ENCODE measurements at regions of chr11 and their contacts with region 1.

Region 1: DNA sequence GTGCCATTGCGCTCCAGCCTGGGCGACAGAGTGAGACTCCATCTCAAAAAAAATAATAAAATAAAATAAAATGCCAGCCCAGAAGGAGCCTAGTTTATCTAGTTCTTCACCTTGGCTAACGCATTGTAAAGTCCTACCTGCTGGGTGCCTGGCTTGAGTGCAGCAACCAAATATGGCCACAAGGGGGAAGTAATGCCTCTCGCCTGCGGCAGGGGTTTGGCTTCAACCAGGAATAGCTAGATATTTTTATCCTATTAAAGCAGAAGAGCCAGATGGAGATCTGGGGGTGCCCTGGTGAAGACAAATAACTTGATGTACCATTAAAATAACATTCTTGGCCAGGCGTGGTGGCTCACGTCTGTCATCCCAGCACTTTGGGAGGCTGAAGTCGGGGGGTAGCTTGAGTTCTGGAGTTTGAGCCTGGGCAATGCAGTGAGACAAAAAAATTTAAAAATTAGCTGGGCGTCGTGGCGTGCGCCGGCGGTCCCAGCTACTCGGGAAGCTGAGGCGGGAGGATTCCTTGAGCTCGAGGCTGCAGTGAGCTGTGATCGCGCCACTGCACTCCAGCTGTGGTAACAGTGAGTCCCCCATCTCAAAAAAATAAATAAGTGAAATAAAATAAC is 20.6 kb upstream of the PLEKHB1 start:
- DNase-seq: peak; percentile 81
- ATAC-seq: peak; percentile 91
- H3K4me3 Mint-ChIP-seq: no peak overlapping the region
- H3K27ac Mint-ChIP-seq: no peak overlapping the region
- H3K4me1 Mint-ChIP-seq: no peaks in the 10 kb centered on the region
- H3K27me3 Mint-ChIP-seq: peaks cover 8% of the 10 kb centered on the region

Region 2: DNA sequence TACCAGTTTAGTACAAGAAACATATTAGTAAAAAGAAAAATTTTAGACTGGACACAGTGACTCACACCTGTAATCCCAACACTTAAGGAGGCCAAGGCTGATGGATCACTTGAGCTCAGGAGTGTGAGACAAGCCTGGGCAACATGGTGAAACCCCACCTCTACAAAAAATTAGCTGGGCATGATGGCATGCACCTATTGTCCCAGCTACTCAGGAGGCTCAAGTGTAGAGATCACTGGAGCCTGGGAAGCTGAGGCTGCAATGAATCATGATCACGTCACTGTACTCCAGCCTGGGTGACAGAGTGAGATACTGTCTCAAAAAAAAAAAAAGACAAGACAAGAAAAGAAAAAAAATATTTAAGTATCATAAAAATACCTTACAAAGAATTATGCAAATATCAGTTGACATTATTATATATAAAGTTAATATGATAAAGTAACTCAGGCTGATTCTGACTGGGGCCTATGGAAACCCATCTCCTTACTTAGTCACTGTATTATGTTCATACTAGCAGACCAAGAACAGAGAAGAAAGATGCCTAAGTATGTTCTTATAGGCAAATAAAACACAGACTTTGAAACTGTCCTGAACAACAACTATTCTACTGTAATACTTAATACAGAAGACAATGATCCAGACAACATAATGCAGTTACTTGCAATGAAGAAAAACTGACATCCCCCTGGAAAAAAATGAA is 55.2 kb before region 1 on chr11:
- CTCF ChIA-PET with region 1: interaction called, 5 read pairs
- POLR2A ChIA-PET with region 1: interaction called, 14 read pairs
- intact Hi-C with region 1: no loop called
- DNase-seq: no peak
- ATAC-seq: no peak
- H3K4me3 Mint-ChIP-seq: no peak overlapping the region
- H3K27ac Mint-ChIP-seq: no peak overlapping the region
- H3K4me1 Mint-ChIP-seq: no peaks in the 10 kb centered on the region
- H3K27me3 Mint-ChIP-seq: no peaks in the 10 kb centered on the region

Region 3: GRCh38 chr11:73640592-73640991 is 14.8 kb after region 1 on chr11:
- CTCF ChIA-PET with region 1: interaction called, 35 read pairs
- POLR2A ChIA-PET with region 1: no interaction called
- intact Hi-C with region 1: no loop called
- DNase-seq: no peak
- ATAC-seq: peak; percentile 30
- H3K4me3 Mint-ChIP-seq: no peak overlapping the region
- H3K27ac Mint-ChIP-seq: peak overlapping the region; percentile 27
- H3K4me1 Mint-ChIP-seq: peaks cover 10% of the 10 kb centered on the region
- H3K27me3 Mint-ChIP-seq: no peaks in the 10 kb centered on the region

Region 4: DNA sequence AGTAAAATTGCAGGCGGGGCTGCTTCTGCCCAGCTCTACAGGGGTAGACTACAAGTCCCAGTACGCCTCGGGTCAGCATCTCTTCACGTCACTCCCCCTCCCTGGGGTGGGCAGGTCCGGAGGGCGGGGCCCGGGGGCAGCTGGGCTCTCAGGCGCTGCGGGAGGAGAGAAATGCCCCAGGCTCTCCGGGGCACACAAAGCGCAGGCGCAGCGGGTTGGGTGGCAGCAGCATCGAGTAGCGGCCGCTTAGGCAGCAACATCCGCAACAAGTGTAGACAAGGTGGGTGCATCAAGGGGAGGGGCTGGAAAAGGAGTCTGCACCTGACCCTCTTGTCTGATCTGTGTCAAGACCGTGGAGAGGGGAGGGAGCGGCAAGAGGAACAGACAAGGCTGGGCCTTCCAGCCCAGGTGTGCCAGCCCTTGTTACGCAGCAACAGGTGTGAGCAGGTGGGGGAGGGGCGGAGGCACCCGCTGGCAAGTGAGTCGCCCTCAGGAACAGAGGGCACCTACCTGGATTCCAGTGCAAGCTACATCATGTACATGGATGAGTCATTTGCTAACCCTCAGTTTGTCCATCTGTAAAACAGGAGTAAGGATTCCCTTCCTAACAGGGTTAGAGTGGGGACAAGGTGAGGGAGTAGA is 21.8 kb after region 1 on chr11:
- CTCF ChIA-PET with region 1: interaction called, 35 read pairs
- POLR2A ChIA-PET with region 1: no interaction called
- intact Hi-C with region 1: no loop called
- DNase-seq: peak; percentile 96
- ATAC-seq: peak; percentile 100
- H3K4me3 Mint-ChIP-seq: peak overlapping the region; percentile 75
- H3K27ac Mint-ChIP-seq: peak overlapping the region; percentile 86
- H3K4me1 Mint-ChIP-seq: peaks cover 15% of the 10 kb centered on the region
- H3K27me3 Mint-ChIP-seq: no peaks in the 10 kb centered on the region

Region 5: GRCh38 chr11:73931039-73931645 is 305.3 kb after region 1 on chr11:
- CTCF ChIA-PET with region 1: interaction called, 17 read pairs
- POLR2A ChIA-PET with region 1: no interaction called
- intact Hi-C with region 1: loop called (anchors 1 to 10 kb)
- DNase-seq: peak; percentile 29
- ATAC-seq: peak; percentile 83
- H3K4me3 Mint-ChIP-seq: no peak overlapping the region
- H3K27ac Mint-ChIP-seq: no peak overlapping the region
- H3K4me1 Mint-ChIP-seq: no peaks in the 10 kb centered on the region
- H3K27me3 Mint-ChIP-seq: no peaks in the 10 kb centered on the region